Sigmoid colon (tissue), 7 donors: ENCODE measurements at regions of chr5 and their contacts with region 1.

Region 1: GRCh38 chr5:38193015-38193581 is 65.3 kb upstream of the EGFLAM start:
- DNase-seq: peak; percentile 81
- H3K4me3 ChIP-seq: no peak overlapping the region
- H3K27ac ChIP-seq: no peak overlapping the region
- H3K4me1 ChIP-seq: peaks cover 0 to 9% (median 2%) of the 10 kb centered on the region in 4 donors
- H3K27me3 ChIP-seq: no peaks in the 10 kb centered on the region
- CTCF ChIP-seq: peak; percentile 81 to 89 (median 86)
- EP300 ChIP-seq: no peak
- POLR2A ChIP-seq: no peak

Region 2: DNA sequence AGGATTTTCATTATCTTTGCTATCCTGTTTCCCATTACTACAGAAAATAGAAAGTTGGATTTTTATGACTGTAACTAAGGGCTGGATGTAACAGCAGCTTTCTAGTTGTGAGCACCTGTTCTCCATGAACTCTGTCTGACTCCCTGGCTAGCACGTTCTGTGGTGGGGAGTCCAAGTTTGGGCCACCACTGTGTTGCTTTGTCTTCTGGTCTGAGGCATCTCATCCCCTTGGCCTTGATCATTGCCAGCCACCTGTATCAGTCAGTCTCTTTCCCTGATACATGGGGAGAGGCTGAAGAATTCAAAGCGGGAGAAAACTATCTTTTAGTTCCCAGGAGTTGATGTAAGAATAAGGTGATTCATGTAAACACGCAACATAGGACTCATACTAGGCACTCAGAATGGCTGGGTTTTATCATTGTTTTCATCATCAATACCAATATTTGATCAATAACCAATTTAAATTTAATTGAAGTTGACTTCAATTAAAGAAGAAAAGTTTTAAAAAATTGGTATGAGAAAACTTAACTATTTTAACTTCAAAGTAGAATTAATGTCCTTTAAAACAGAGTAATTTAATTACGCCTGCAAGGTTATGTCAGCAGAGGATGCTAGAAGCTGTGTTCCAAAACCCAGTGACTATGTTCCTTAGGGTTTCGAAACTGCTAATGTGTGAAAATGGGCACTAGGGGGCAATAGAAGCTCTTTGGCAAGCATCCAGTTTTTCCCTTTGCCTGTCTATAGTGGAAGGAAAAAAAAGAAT is 780.4 kb before region 1 on chr5:
- intact Hi-C with region 1: loop called (anchors 1 kb)
- DNase-seq: peak; percentile 74
- H3K4me3 ChIP-seq: no peak overlapping the region
- H3K27ac ChIP-seq: no peak overlapping the region
- H3K4me1 ChIP-seq: peaks cover 0 to 4% (median 0%) of the 10 kb centered on the region in 4 donors
- H3K27me3 ChIP-seq: no peaks in the 10 kb centered on the region
- CTCF ChIP-seq: peak; percentile 88 to 97 (median 90)
- EP300 ChIP-seq: no peak
- POLR2A ChIP-seq: no peak

Region 3: DNA sequence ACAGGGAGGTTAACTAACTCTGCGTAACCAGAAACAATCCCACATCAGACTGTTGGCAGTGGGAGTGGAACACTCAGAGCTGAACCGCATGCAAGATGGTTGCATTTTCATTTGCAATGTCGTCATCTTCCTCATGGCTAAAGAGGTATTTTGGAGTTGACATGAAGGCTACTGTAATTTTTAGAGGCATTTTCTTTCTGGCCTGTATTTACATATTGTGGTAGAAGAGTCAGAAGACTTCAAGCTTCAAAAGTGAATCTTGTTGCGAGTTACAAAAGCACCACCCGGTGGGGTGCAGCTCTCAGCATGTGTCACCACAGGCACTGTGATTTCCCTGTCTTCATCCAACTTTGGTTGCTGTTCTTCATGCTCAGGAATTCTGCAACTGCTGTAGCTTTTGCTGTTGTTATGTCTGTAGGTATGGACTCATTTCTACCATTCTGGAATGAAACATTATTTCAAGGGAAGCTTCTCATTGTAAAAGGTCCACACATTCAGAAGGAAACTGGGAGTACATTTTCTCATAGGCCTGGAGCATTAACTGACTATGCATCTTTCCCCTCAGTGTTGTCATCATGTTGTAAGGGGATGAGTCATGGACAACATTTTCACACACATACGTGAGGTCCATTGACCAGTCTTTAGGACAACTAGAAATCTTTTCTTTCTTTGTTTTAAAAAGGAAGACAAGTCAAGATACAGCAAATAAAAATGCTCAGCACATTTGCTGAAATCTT is 317.9 kb before region 1 on chr5:
- intact Hi-C with region 1: no loop called
- DNase-seq: no peak
- H3K4me3 ChIP-seq: no peak overlapping the region
- H3K27ac ChIP-seq: no peak overlapping the region
- H3K4me1 ChIP-seq: no peaks in the 10 kb centered on the region
- H3K27me3 ChIP-seq: no peaks in the 10 kb centered on the region
- CTCF ChIP-seq: no peak
- EP300 ChIP-seq: no peak
- POLR2A ChIP-seq: no peak